Activated naive CD4-positive, alpha-beta T cell treated with anti-CD3 and anti-CD28 coated beads for 36 hours (primary cell): ENCODE measurements at regions of chr18 and their contacts with region 1.

Region 1: GRCh38 chr18:63339920-63340484 is 20.4 kb upstream of the BCL2 start:
- DNase-seq: peak; percentile 65
- H3K4me3 Mint-ChIP-seq: no peak overlapping the region
- H3K27ac Mint-ChIP-seq: no peak overlapping the region
- H3K4me1 Mint-ChIP-seq: peaks cover 12% of the 10 kb centered on the region
- H3K27me3 Mint-ChIP-seq: no peaks in the 10 kb centered on the region

Region 2: DNA sequence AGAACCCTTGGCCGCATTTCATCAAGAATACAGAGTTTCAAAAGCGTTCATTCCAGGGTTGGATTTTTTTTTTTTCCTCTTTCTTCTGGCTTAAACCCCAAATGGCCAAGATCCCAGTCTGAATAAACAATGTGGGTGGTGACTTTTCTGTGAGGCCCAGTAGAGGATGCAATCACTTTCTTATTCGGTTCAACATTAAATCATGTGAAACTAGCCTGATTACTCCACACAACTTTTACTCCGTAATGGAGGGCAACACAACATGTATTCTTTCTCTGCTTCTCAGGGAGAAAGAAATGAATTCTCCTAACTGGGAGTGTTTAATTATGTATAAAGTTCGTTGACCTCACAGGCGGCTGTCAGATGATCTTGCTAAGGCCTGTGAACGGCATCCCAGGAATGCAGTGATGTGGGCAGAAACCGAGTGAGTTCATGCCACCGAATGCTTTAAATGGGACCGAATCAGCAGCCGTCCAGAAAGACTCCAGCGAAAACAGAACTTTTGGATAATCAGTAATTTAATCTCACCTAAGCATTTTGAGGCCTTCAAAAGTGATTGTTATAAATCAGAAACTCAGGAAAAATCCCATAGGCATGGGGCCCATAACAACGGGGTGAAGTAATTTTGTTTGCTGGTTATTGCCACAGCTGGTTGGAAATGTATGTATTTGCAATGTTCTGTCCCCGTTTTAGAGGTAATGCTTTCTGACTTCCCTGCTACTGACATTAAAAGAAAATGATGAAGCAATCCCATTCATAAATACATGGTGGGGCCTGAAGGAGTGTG is 101.9 kb before region 1 on chr18:
- CTCF ChIA-PET with region 1: no interaction called
- intact Hi-C with region 1: no loop called
- DNase-seq: no peak
- H3K4me3 Mint-ChIP-seq: no peak overlapping the region
- H3K27ac Mint-ChIP-seq: no peak overlapping the region
- H3K4me1 Mint-ChIP-seq: peaks cover 62% of the 10 kb centered on the region
- H3K27me3 Mint-ChIP-seq: no peaks in the 10 kb centered on the region

Region 3: DNA sequence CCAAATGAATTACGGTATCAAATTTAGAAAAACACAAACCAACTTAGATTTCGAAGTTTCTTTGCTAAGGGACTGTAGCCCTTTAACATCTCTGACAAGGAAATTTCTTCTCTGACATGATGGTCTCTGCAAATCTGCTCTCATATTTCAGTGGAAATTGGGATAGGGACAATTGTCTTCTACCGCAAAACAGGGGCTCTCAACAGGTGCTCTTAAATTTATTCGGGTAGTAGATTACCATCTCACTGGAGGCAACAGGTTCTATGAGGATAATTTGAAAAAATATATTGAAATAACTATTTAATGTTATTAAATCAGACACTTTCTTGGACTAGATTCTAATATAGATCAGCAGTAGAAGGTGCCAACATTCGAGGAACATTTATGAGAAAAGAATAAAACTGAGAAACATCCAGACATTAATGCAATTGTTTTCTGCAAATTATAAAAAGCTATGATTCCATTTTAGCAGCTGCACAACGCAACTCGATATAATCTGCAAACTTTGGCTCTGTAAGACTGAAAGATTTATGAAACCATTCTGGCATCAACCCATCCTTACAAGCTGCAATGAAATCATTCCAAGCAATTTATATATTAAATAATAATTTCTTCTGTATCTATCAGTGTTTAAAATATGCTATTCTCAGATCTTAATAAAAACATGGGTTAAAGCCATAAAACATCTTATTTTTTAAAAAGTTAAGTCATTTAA is 10.4 kb before region 1 on chr18:
- CTCF ChIA-PET with region 1: interaction called, 17 read pairs
- intact Hi-C with region 1: no loop called
- DNase-seq: no peak
- H3K4me3 Mint-ChIP-seq: no peak overlapping the region
- H3K27ac Mint-ChIP-seq: no peak overlapping the region
- H3K4me1 Mint-ChIP-seq: no peaks in the 10 kb centered on the region
- H3K27me3 Mint-ChIP-seq: no peaks in the 10 kb centered on the region

Region 4: GRCh38 chr18:63476666-63477065 is 136.7 kb after region 1 on chr18 and contains the start of gene SERPINB5:
- CTCF ChIA-PET with region 1: no interaction called
- intact Hi-C with region 1: no loop called
- DNase-seq: no peak
- H3K4me3 Mint-ChIP-seq: no peak within 1 kb of the TSS
- H3K27ac Mint-ChIP-seq: no peak within 1 kb of the TSS
- H3K4me1 Mint-ChIP-seq: no peaks in the 10 kb centered on the region
- H3K27me3 Mint-ChIP-seq: no peaks in the 10 kb centered on the region
- total RNA-seq, gene SERPINB5: not detected

Region 5: GRCh38 chr18:63505566-63506335 is 165.7 kb after region 1 on chr18:
- CTCF ChIA-PET with region 1: no interaction called
- intact Hi-C with region 1: loop called (anchors 1 kb)
- DNase-seq: peak; percentile 64
- H3K4me3 Mint-ChIP-seq: no peak overlapping the region
- H3K27ac Mint-ChIP-seq: no peak overlapping the region
- H3K4me1 Mint-ChIP-seq: no peaks in the 10 kb centered on the region
- H3K27me3 Mint-ChIP-seq: peaks cover 28% of the 10 kb centered on the region

Region 6: GRCh38 chr18:63523660-63524059 is 183.7 kb after region 1 on chr18:
- CTCF ChIA-PET with region 1: no interaction called
- intact Hi-C with region 1: no loop called
- DNase-seq: no peak
- H3K4me3 Mint-ChIP-seq: no peak overlapping the region
- H3K27ac Mint-ChIP-seq: no peak overlapping the region
- H3K4me1 Mint-ChIP-seq: no peaks in the 10 kb centered on the region
- H3K27me3 Mint-ChIP-seq: peaks cover 10% of the 10 kb centered on the region

Region 7: DNA sequence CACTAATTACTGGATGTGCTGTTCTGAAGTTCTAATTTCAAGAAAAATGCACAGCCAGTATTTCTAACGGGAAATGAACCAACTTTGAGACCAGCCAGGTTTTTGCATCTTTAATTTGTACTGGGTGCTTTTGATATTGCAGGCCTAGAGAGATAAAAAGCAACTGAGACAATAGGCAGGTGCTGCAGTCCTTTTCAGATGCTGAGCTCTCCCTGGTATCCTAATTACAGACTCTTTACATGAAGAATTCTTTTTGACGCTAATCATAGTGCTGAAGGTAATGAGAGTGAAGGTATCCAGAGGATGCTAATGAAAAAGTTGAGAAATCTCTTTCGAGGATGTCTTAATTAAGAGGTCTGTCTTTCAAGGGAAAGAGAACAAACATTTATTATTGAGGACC is 715.0 kb after region 1 on chr18:
- CTCF ChIA-PET with region 1: no interaction called
- intact Hi-C with region 1: no loop called
- DNase-seq: no peak
- H3K4me3 Mint-ChIP-seq: no peak overlapping the region
- H3K27ac Mint-ChIP-seq: no peak overlapping the region
- H3K4me1 Mint-ChIP-seq: no peaks in the 10 kb centered on the region
- H3K27me3 Mint-ChIP-seq: no peaks in the 10 kb centered on the region